CD4-positive, alpha-beta T cell (primary cell): ENCODE measurements at regions of chr21 and their contacts with region 1.

Region 1: DNA sequence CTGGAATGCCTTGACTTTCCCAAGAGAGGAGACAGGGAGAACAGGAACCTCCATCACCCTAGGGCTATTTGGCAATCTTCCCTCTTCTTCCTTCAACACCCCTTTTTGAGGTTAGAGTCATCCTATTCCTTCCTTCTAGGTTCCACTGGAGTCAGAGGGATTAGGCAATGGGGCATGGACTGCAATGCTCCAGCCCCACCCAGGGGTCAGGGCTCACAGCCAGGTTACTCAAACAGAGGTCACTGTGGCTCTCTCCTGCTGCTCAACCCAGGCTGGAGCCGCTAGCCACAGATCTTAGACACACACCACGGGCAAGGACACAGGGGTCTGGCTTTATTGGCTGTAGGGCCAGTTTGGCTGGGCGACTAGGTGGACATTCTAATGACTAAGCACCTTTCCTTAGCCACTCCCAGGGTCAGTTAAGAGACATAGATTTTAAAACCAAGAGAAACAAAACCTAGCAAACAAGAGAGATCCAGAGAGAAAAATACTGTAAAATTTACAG is 145.5 kb upstream of the NRIP1 start:
- DNase-seq: peak in 2 of 14 experiments; percentile 30 to 45
- ATAC-seq: no peak
- H3K4me3 ChIP-seq: no peak overlapping the region
- H3K4me3 Mint-ChIP-seq: no peak overlapping the region
- H3K27ac ChIP-seq: no peak overlapping the region
- H3K27ac Mint-ChIP-seq: no peak overlapping the region
- H3K4me1 ChIP-seq: peaks cover 3% of the 10 kb centered on the region
- H3K4me1 Mint-ChIP-seq: no peaks in the 10 kb centered on the region
- H3K27me3 ChIP-seq: no peaks in the 10 kb centered on the region
- H3K27me3 Mint-ChIP-seq: peaks cover under 1% of the 10 kb centered on the region
- CTCF ChIP-seq: no peak

Region 2: DNA sequence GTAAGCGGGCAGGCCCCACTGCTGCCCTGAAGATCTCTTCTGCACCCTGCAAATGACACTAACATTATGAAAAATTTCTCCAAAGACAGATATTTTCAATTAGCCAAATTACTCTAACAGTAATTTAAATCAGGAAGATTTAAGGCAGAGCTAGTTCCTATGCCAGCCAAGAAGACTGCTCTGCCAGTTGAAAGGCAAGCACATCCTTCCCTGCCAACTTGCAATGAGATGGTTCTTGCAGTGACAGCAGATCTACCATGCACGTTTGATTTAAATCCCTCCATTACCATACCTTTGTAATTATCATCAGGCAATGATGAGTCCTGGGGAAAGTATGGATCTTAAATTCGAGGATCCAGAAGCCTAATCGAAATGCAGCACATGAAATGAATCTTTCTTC is 740.6 kb before region 1 on chr21:
- CTCF ChIA-PET with region 1: no interaction called
- POLR2A ChIA-PET with region 1: no interaction called
- intact Hi-C with region 1: no loop called
- DNase-seq: no peak
- ATAC-seq: no peak
- H3K4me3 ChIP-seq: no peak overlapping the region
- H3K4me3 Mint-ChIP-seq: no peak overlapping the region
- H3K27ac ChIP-seq: no peak overlapping the region
- H3K27ac Mint-ChIP-seq: no peak overlapping the region
- H3K4me1 ChIP-seq: no peaks in the 10 kb centered on the region
- H3K4me1 Mint-ChIP-seq: no peaks in the 10 kb centered on the region
- H3K27me3 ChIP-seq: no peaks in the 10 kb centered on the region
- H3K27me3 Mint-ChIP-seq: no peaks in the 10 kb centered on the region
- CTCF ChIP-seq: no peak

Region 3: DNA sequence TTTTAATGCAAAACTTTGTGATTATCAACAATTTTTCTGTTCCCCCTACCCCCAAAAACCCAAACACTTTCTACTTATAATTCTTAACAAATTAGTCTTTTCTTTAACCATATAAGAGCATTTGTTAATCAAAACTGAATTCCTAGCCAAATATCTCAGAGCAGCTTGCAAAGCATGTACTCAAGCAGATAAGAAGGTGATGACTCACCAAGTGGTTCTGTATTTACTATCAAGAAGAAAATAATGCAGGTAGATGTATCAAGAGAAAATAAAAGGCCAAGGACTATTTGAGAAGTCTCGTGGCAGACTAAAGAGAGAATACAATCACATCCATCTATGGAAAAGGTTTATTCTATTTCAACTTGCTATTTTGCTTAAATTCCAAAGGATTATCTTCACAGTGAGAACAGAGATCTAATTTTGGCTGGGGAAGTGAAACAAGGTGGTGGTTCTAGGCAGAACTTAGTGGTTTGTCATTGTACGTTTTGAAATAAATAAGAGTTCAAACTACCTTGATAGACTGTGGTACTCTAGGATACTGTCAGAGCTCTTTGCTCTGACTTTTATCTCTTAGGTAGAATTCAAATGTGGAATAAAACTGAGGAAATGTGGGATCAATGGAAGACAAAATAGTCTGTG is 50.8 kb before region 1 on chr21:
- CTCF ChIA-PET with region 1: no interaction called
- POLR2A ChIA-PET with region 1: no interaction called
- intact Hi-C with region 1: no loop called
- DNase-seq: no peak
- ATAC-seq: no peak
- H3K4me3 ChIP-seq: no peak overlapping the region
- H3K4me3 Mint-ChIP-seq: no peak overlapping the region
- H3K27ac ChIP-seq: no peak overlapping the region
- H3K27ac Mint-ChIP-seq: no peak overlapping the region
- H3K4me1 ChIP-seq: no peaks in the 10 kb centered on the region
- H3K4me1 Mint-ChIP-seq: no peaks in the 10 kb centered on the region
- H3K27me3 ChIP-seq: no peaks in the 10 kb centered on the region
- H3K27me3 Mint-ChIP-seq: no peaks in the 10 kb centered on the region
- CTCF ChIP-seq: no peak

Region 4: GRCh38 chr21:15229390-15229789 is 19.1 kb after region 1 on chr21:
- CTCF ChIA-PET with region 1: no interaction called
- POLR2A ChIA-PET with region 1: no interaction called
- intact Hi-C with region 1: loop called in 1 of 2 experiments (anchors 2 kb)
- DNase-seq: no peak
- ATAC-seq: no peak
- H3K4me3 ChIP-seq: no peak overlapping the region
- H3K4me3 Mint-ChIP-seq: no peak overlapping the region
- H3K27ac ChIP-seq: no peak overlapping the region
- H3K27ac Mint-ChIP-seq: no peak overlapping the region
- H3K4me1 ChIP-seq: no peaks in the 10 kb centered on the region
- H3K4me1 Mint-ChIP-seq: no peaks in the 10 kb centered on the region
- H3K27me3 ChIP-seq: no peaks in the 10 kb centered on the region
- H3K27me3 Mint-ChIP-seq: no peaks in the 10 kb centered on the region
- CTCF ChIP-seq: no peak